ENCODE measurements at regions of chr10 and their contacts with region 1.

Region 1: GRCh38 chr10:43348511-43349312 is 22.7 kb upstream of the FXYD4 start:
- DNase-seq: peak; percentile 82
- H3K4me3 Mint-ChIP-seq: no peak overlapping the region
- H3K27ac Mint-ChIP-seq: no peak overlapping the region
- H3K4me1 Mint-ChIP-seq: peaks cover 9% of the 10 kb centered on the region
- H3K27me3 Mint-ChIP-seq: no peaks in the 10 kb centered on the region
- CTCF ChIP-seq: peak; percentile 92

Region 2: DNA sequence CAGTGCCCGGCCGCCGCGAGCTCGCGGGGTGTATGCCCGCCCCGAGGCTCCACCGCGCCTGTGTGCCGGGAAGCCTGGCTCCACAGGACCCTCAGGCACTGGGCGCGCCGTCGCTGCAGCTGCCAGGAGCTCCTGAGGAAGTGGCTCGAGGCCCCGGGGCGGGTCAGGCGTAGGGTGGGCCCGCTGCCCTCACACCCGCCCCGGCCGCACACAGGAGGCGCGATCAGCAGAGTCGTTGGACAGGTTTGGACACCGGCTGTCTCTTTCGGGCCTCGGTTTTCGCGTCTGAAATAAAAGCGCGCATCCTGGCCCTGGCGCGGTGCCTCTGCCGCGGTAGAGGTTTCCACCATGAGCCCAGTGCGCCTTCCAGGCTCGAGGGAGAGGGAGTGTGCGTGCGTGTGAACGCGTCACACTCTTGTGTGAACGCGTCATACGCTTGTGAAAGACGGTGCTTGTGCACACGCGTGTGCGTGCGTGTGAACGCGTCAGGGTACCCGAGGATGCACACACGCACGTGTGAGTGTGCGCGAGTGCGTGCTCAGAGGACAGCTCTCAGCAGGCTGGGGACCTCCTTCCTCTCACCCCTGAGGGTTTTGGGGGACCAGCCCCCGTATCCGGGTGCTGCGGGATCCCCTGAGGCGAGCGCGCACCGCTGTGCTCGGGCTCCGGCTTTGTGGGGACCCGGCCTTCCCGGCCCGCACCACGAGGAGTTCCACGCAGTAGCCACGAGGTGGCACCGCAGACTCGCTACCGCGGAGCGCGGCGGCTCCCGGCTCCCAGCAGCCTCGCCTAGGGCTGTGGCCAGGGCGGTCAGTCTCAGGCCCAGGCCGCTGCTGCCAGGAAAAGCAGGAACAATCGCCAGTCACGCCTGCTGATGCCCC is 482.4 kb before region 1 on chr10:
- CTCF ChIA-PET with region 1: interaction called, 3 read pairs
- POLR2A ChIA-PET with region 1: no interaction called
- intact Hi-C with region 1: loop called (anchors 2 kb)
- DNase-seq: peak; percentile 35
- H3K4me3 Mint-ChIP-seq: no peak overlapping the region
- H3K27ac Mint-ChIP-seq: no peak overlapping the region
- H3K4me1 Mint-ChIP-seq: no peaks in the 10 kb centered on the region
- H3K27me3 Mint-ChIP-seq: no peaks in the 10 kb centered on the region
- CTCF ChIP-seq: peak; percentile 73

Region 3: GRCh38 chr10:43170491-43170890 is 178.2 kb before region 1 on chr10:
- CTCF ChIA-PET with region 1: interaction called, 11 read pairs
- POLR2A ChIA-PET with region 1: no interaction called
- intact Hi-C with region 1: no loop called
- DNase-seq: no peak
- H3K4me3 Mint-ChIP-seq: no peak overlapping the region
- H3K27ac Mint-ChIP-seq: peak overlapping the region; percentile 59
- H3K4me1 Mint-ChIP-seq: peaks cover 11% of the 10 kb centered on the region
- H3K27me3 Mint-ChIP-seq: no peaks in the 10 kb centered on the region
- CTCF ChIP-seq: no peak

Region 4: DNA sequence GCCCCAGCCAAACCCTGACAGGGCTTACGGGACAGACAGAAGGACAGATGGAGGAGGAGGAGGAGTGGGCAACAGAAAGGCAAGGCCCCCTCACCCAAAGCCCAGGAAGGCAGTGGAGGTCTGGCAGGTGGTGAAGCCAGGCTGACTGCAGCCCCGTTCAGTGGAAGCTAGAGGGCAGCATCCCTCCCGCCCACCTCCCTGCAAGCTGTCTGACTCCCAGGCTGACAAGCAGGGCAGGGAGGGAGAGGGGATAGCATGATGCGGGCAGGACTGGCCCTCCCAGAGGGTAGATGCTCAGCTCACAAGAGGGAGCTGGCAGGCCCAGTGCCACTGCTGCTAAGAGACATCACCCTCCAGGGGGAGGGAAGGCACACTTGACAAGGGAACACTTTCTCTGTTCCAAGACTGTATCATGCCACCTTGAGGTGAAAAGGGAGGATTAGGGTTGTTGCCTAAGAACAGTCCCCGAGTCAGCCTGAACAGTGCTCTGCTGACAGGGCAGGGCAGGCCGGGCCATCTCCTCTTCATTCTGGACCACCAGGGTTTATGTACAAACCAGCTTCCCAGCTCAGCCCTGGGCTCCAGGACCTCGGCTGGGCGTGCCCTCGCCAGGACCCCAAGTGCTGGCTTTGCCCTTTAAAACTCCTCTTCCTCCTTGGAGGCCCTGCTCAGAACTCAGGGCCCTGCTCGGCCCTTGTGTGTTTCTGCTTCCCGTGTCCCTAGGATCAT is 143.6 kb before region 1 on chr10:
- CTCF ChIA-PET with region 1: interaction called, 8 read pairs
- POLR2A ChIA-PET with region 1: no interaction called
- intact Hi-C with region 1: loop called (anchors 1 kb)
- DNase-seq: peak; percentile 64
- H3K4me3 Mint-ChIP-seq: no peak overlapping the region
- H3K27ac Mint-ChIP-seq: no peak overlapping the region
- H3K4me1 Mint-ChIP-seq: no peaks in the 10 kb centered on the region
- H3K27me3 Mint-ChIP-seq: no peaks in the 10 kb centered on the region
- CTCF ChIP-seq: peak; percentile 61

Region 5: GRCh38 chr10:43411536-43411935 is 62.8 kb after region 1 on chr10:
- CTCF ChIA-PET with region 1: no interaction called
- POLR2A ChIA-PET with region 1: no interaction called
- intact Hi-C with region 1: no loop called
- DNase-seq: no peak
- H3K4me3 Mint-ChIP-seq: no peak overlapping the region
- H3K27ac Mint-ChIP-seq: no peak overlapping the region
- H3K4me1 Mint-ChIP-seq: peaks cover 11% of the 10 kb centered on the region
- H3K27me3 Mint-ChIP-seq: no peaks in the 10 kb centered on the region
- CTCF ChIP-seq: no peak

Region 6: GRCh38 chr10:43479275-43479674 is 130.6 kb after region 1 on chr10:
- CTCF ChIA-PET with region 1: no interaction called
- POLR2A ChIA-PET with region 1: no interaction called
- intact Hi-C with region 1: no loop called
- DNase-seq: no peak
- H3K4me3 Mint-ChIP-seq: no peak overlapping the region
- H3K27ac Mint-ChIP-seq: no peak overlapping the region
- H3K4me1 Mint-ChIP-seq: no peaks in the 10 kb centered on the region
- H3K27me3 Mint-ChIP-seq: no peaks in the 10 kb centered on the region
- CTCF ChIP-seq: no peak